ENCODE measurements at regions of chr7 and their contacts with region 1.

Region 1: DNA sequence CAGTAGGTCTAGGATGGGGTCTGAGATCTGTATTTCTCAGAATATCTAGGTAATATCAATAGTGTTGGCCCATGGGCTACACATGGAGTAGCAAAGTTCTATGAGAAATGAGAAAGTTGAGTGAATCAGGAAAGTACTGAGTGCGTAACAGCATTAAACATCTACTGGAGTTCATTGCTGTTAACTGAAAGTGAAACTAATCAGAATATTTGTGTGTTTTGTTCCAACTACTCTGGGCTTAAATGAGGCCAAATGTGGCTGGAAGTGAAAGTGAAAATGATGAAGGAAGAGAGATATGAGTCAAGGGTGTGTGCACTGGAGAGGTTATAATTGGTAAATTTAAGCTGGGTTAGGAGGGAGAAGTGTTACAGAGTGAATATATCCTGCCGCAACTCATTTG is 46.5 kb downstream of the TMEM106B start:
- DNase-seq: peak; percentile 48
- H3K4me3 Mint-ChIP-seq: no peak overlapping the region
- H3K27ac Mint-ChIP-seq: no peak overlapping the region
- H3K4me1 Mint-ChIP-seq: peaks cover 6% of the 10 kb centered on the region
- H3K27me3 Mint-ChIP-seq: no peaks in the 10 kb centered on the region

Region 2: DNA sequence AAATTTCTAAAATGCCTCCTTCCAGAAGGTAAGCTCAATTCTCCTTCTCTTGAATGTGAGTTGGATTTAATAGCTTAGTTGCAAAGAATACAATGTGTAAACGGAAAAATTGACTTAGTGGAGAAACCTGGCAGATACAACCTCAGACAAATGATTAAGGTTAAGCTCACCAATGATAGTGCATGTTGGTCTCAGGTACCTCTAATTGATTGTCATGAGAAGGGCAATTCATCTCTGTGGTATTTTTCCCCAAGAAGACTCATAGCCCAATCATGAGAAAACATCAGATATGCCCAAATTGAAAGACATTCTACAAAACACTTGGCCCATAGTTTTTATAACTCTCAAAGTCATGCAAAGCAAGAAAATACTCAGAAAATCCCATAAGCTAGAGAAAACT is 82.7 kb before region 1 on chr7:
- CTCF ChIA-PET with region 1: no interaction called
- intact Hi-C with region 1: loop called (anchors 1 kb)
- DNase-seq: no peak
- H3K4me3 Mint-ChIP-seq: no peak overlapping the region
- H3K27ac Mint-ChIP-seq: no peak overlapping the region
- H3K4me1 Mint-ChIP-seq: peaks cover 17% of the 10 kb centered on the region
- H3K27me3 Mint-ChIP-seq: no peaks in the 10 kb centered on the region

Region 3: DNA sequence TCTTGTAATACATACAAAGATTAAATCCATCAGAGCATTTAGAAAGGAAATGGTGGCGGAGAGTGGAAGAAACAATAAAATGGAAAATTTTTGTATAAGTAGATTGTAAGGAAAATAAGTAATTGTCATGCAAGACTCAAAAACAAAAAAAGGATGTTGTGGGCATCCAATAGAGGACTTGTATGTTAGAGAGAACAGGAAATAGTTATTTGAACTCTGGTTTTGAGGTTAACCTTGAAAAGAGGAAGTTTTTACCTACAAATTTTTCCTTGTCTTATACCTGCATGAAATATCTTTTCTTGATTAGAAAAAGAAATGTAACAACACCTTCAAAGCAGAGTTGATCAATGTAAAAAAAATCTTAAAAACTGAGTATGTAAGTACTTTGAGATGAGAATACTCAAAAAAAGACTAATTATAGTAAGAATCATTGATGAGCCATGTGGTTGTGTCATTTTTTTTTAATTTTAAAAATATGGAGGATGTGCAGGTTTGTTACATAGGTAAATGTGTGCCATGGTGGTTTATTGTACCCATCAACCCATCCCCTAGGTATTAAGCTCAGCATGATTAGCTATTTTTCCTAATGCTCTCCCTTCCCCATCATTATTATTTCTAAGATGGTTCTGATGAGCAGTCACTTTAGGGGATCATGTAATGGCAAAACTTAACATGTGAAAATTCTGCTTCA is 34.5 kb before region 1 on chr7:
- CTCF ChIA-PET with region 1: interaction called, 4 read pairs
- intact Hi-C with region 1: loop called (anchors 2 kb)
- DNase-seq: no peak
- H3K4me3 Mint-ChIP-seq: peak overlapping the region; percentile 36
- H3K27ac Mint-ChIP-seq: peak overlapping the region; percentile 88
- H3K4me1 Mint-ChIP-seq: peaks cover 35% of the 10 kb centered on the region
- H3K27me3 Mint-ChIP-seq: no peaks in the 10 kb centered on the region

Region 4: DNA sequence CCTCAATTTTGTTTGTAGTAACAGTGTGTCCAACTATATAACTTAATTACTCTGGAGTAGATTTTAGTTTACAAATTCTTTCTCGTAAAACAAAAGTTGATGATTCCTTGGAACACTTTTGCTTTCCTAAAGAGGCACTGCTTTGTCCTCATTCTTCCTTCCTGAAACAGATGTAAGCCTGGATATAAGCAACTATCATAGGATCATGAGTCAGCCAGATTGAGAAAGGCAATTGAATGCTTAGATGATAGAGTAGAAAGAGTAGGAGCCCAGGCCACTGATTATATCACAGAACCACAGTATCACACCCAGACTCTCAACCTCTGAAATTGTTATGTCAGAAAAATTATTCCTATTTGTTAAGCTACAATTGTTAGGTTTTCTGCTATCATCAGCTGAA is 23.5 kb after region 1 on chr7:
- CTCF ChIA-PET with region 1: no interaction called
- intact Hi-C with region 1: loop called (anchors 1 kb)
- DNase-seq: no peak
- H3K4me3 Mint-ChIP-seq: no peak overlapping the region
- H3K27ac Mint-ChIP-seq: no peak overlapping the region
- H3K4me1 Mint-ChIP-seq: peaks cover 4% of the 10 kb centered on the region
- H3K27me3 Mint-ChIP-seq: peaks cover 3% of the 10 kb centered on the region

Region 5: GRCh38 chr7:12403287-12404181 is 146.0 kb after region 1 on chr7 and contains the start of gene VWDE:
- CTCF ChIA-PET with region 1: no interaction called
- intact Hi-C with region 1: loop called (anchors 2 kb)
- DNase-seq: peak; percentile 76
- H3K4me3 Mint-ChIP-seq: peak within 1 kb of the TSS; percentile 75
- H3K27ac Mint-ChIP-seq: peak within 1 kb of the TSS; percentile 77
- H3K4me1 Mint-ChIP-seq: peaks cover 9% of the 10 kb centered on the region
- H3K27me3 Mint-ChIP-seq: peaks cover 14% of the 10 kb centered on the region
- total RNA-seq, gene VWDE: 1.5 to 1.9 TPM

Region 6: GRCh38 chr7:12475362-12476063 is 217.9 kb after region 1 on chr7:
- CTCF ChIA-PET with region 1: no interaction called
- intact Hi-C with region 1: no loop called
- DNase-seq: no peak
- H3K4me3 Mint-ChIP-seq: no peak overlapping the region
- H3K27ac Mint-ChIP-seq: no peak overlapping the region
- H3K4me1 Mint-ChIP-seq: no peaks in the 10 kb centered on the region
- H3K27me3 Mint-ChIP-seq: no peaks in the 10 kb centered on the region

Region 7: DNA sequence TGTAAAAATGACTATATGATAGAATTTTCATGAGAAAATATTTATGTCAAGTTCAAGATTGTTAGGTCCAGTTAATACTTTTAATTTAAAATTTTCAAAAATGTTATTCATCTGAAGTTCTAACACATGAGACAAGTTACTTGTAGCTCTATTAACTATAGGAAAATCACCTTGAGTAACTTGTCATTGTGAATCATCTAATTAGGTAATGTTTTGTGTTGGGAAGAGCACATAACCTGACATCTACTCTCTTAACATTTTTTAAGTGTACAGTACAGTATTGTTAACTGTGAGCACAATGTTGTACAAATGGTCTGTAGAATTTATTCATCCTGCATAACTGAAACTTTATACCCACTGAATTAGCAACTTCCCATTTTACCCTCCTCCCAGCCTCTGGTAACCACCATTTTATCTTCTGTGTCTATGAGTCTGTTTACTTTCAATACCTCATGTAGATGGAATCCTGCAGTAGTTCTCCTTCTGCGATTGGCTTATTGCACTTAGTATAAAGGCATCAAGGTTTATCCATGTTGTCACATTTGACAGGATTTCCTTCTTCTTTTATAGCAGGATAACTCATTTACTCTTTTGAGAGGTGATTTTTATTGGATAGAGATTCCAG is 484.5 kb after region 1 on chr7:
- CTCF ChIA-PET with region 1: no interaction called
- intact Hi-C with region 1: no loop called
- DNase-seq: no peak
- H3K4me3 Mint-ChIP-seq: no peak overlapping the region
- H3K27ac Mint-ChIP-seq: no peak overlapping the region
- H3K4me1 Mint-ChIP-seq: no peaks in the 10 kb centered on the region
- H3K27me3 Mint-ChIP-seq: peaks cover 1% of the 10 kb centered on the region

Measured in activated naive CD4-positive, alpha-beta T cell treated with anti-CD3 and anti-CD28 coated beads for 36 hours (primary cell).